Common myeloid progenitor, CD34-positive (primary cell): ENCODE measurements at regions of chr7 and their contacts with region 1.

Region 1: DNA sequence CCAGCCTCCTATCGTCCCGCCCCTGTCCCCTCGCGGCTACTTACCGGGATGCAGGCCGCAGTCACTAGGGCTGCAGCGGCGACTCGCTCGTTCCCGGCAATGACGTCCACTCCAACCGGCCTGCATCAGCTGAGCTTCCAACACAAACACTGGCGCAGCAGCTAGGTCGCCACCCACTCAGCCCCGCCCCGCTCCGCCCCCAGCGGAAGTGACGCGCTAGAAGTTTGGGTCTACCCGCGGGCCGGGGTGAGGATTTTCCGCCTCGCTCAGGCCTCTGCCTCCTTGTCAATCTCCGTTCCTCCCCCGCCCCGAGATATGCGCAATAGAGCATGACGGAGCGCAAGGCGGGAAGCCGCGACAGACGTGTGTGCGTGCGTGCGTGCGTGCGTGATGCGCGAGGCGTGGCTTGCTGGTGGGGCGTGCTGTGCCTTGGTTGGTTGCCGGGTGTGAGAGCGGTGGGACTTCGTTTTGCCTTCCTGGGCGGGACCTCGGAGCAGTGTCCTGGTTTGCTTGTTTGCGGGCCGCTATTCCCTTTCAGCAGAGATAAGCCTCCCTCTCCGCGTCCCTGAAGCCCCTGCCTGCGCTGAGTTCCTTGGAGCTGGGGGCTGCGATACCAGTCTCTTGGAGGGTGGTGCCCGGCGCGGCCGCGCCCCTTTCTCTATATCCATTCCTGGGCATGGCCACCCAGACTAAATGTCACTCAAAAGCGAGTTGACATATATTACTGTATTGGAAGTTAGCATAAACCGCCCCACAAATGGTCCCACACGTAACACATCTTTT is at the start of gene PNPLA8:
- DNase-seq: peak; percentile 100
- H3K4me3 ChIP-seq: peak within 1 kb of the TSS; percentile 80 to 98 (median 92)
- H3K27ac ChIP-seq: peak within 1 kb of the TSS; percentile 95 to 99
- H3K4me1 ChIP-seq: peaks cover 5 to 23% (median 12%) of the 10 kb centered on the region in 4 experiments
- H3K27me3 ChIP-seq: no peaks in the 10 kb centered on the region

Region 2: DNA sequence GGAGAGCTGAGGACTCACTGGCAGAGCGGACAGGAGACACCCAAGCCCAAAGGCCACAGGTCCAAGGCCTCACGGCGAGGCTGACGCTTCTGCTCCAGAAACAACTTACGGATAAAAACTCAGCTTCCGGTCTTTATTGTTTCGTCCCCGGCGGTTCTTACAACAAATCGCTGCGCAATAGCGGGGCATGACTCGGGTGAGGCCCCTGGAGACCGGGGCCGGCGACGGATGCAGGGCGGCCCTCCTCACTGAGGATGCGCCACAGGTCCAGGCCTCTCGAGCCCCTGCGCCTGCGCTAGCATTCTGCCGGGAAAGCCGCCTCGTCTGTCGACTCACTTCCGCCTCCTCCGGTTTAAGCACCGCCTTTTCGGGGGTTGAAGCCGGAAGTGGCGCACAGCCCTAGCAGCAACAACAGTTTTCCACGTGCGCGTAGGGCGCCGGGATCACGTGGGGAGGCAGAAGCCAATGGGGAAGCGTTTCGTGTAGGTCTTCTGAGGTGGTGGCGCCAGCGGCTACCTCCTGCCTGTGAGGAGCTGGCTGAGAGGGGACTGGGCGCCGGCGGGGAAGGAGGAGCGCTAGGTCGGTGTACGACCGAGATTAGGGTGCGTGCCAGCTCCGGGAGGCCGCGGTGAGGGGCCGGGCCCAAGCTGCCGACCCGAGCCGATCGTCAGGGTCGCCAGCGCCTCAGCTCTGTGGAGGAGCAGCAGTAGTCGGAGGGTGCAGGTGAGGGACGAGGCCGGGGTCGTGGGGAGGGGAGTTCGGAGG is 43.4 kb after region 1 on chr7 and contains the starts of genes DNAJB9 and THAP5:
- CTCF ChIA-PET with region 1: interaction called, 4 read pairs
- POLR2A ChIA-PET with region 1: interaction called, 14 read pairs
- DNase-seq: peak; percentile 100
- H3K4me3 ChIP-seq: peak within 1 kb of the TSS; percentile 72 to 89 (median 83)
- H3K27ac ChIP-seq: peak within 1 kb of the TSS; percentile 95 to 98
- H3K4me1 ChIP-seq: peaks cover 13 to 33% (median 24%) of the 10 kb centered on the region in 4 experiments
- H3K27me3 ChIP-seq: no peaks in the 10 kb centered on the region